ENCODE measurements at regions of chr19 and their contacts with region 1.

Region 1: GRCh38 chr19:17390665-17391370 is 3.2 kb downstream of the CCDC194 start:
- DNase-seq: peak; percentile 60 to 63
- ATAC-seq: peak; percentile 66 to 75
- H3K4me3 ChIP-seq: peak overlapping the region; percentile 41 to 56 (median 52)
- H3K27ac ChIP-seq: peak overlapping the region in 1 of 4 donors; percentile 23
- H3K4me1 ChIP-seq: peaks cover 6% of the 10 kb centered on the region in 2 donors
- H3K27me3 ChIP-seq: peaks cover 22 to 29% (median 29%) of the 10 kb centered on the region in 3 donors
- CTCF ChIP-seq: peak; percentile 29 to 76 (median 62)
- POLR2A ChIP-seq: no peak

Region 2: GRCh38 chr19:17346109-17346671 is 44.6 kb before region 1 on chr19:
- in situ Hi-C with region 1: loop called (anchors 5 kb)
- intact Hi-C with region 1: loop called (anchors 1 kb)
- DNase-seq: peak in 1 of 2 donors; percentile 59
- ATAC-seq: peak; percentile 78 to 81
- H3K4me3 ChIP-seq: no peak overlapping the region
- H3K27ac ChIP-seq: peak overlapping the region; percentile 54 to 75 (median 69)
- H3K4me1 ChIP-seq: peaks cover 30 to 33% of the 10 kb centered on the region in 2 donors
- H3K27me3 ChIP-seq: no peaks in the 10 kb centered on the region
- CTCF ChIP-seq: peak; percentile 93 to 98 (median 97)
- POLR2A ChIP-seq: no peak

Region 3: GRCh38 chr19:17522988-17523872 is 132.4 kb after region 1 on chr19:
- in situ Hi-C with region 1: no loop called
- intact Hi-C with region 1: no loop called
- DNase-seq: peak; percentile 31 to 48
- ATAC-seq: peak in 1 of 2 donors; percentile 51
- H3K4me3 ChIP-seq: no peak overlapping the region
- H3K27ac ChIP-seq: peak overlapping the region in 1 of 4 donors; percentile 41
- H3K4me1 ChIP-seq: no peaks in the 10 kb centered on the region
- H3K27me3 ChIP-seq: peaks cover 0 to 11% (median 7%) of the 10 kb centered on the region in 3 donors
- CTCF ChIP-seq: no peak
- POLR2A ChIP-seq: no peak